GM12878 (cell line): ENCODE measurements at regions of chr19 and their contacts with region 1.

Region 1: GRCh38 chr19:51473009-51473707 is 5.2 kb upstream of the CEACAM18 start:
- DNase-seq: peak; percentile 15
- ATAC-seq: peak; percentile 91
- H3K4me3 ChIP-seq: no peak overlapping the region
- H3K27ac ChIP-seq: no peak overlapping the region
- H3K4me1 ChIP-seq: no peaks in the 10 kb centered on the region
- H3K27me3 ChIP-seq: no peaks in the 10 kb centered on the region; a peak in 1 of 4 replicates
- CTCF ChIP-seq: peak; percentile 65 to 93 (median 86)
- EP300 ChIP-seq: no peak
- POLR2A ChIP-seq: no peak
- RAD21 ChIP-seq: peak; percentile 92

Region 2: DNA sequence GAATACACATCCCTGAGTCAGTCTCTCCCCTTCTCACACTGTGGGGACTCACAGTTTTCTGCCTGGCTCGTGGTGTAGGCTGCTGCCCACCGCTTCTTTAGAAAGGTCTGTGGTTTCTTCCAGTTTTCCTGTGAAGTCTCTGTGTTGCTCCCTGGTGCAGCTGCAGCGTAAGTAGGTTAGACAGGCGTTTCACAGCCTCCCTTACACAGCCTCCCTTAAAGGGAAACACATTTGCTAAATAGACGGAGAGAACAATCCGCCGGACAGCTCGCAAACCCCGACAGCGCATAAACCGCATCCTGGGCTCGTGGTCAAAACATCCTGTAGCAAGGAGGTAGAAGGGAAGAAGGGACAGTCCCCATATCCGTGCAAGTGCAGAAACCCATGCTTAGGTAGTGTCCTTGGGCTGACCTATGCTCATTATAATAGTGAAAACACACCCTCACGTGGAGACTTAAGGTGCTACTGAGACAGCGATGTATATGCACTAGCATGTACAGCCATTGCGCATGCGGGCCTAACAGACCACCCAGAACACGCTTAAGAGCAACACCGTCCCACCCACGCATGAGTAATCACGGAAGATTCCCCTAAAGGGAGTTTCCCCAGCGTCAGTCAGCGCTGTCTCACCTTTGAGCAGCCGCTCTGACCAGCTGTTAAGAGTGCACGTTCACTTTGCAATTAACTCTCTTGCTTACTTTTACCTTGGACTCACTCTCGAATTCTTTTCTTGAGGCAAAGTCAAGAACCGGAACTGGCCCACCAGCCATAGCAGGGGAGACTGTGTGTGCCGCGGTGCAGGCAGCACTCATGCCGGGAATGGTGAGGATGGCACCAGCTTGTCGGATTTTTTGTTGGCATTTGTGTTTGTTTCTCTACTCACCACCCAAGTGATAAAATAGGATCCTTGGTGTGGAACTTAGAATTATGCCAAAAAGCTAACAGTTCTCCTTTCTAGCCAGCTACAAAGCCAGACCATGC is 31.5 kb before region 1 on chr19:
- CTCF ChIA-PET with region 1: interaction called, 10 read pairs
- POLR2A ChIA-PET with region 1: no interaction called
- RAD21 ChIA-PET with region 1: interaction called, 4 read pairs
- SMC1A ChIA-PET with region 1: interaction called, 5 read pairs
- in situ Hi-C with region 1: no loop called
- intact Hi-C with region 1: no loop called
- DNase-seq: peak; percentile 91
- ATAC-seq: peak; percentile 94
- H3K4me3 ChIP-seq: peak overlapping the region; percentile 49; the same call in 1 of the 2 replicates
- H3K27ac ChIP-seq: no peak overlapping the region
- H3K4me1 ChIP-seq: peaks cover 27% of the 10 kb centered on the region
- H3K27me3 ChIP-seq: peaks cover 0 to 4% of the 10 kb centered on the region in 2 experiments; a peak in 2 of 4 replicates
- CTCF ChIP-seq: peak in 2 of 3 experiments; percentile 4 to 16; a peak in 2 of 6 replicates
- EP300 ChIP-seq: peak; percentile 56 to 73
- POLR2A ChIP-seq: no peak
- RAD21 ChIP-seq: no peak

Region 3: DNA sequence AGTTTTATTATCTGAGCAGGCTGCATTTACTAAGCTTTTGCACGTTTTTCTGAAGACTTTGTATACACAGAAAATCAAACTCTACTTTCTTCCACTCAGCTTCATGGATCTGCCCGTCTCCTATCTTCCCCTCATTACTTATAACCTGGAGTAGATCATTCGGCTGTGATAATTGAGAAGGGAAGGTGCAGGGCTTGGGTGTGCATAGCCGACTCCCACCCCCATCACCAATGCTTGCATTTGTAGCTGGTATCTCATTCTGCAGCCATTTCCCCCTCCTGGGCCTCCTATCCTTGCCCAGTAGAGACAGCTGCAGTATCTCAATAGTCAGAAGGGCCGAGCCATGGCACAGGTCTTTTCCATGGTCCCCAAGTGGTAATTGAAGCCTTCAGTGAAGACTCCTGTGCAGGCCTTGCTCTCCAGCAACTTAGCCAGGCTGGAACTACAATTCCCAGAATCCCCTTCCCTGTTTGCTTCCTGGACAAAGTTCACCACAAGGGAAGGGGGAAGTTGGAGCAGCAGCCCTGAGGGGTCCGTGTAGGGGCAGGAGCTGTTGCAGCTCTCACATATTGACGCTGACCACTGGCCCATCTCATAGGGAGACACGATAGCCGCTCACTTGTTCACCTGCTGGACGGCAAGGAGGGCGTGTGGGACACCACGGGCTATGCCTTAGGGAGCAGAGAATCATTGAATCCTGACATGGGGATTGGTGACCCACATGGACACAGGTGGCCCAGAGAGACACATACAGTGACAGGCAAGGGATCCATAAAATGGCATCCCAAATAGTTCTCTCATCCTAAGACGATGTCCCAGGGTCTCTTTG is 12.8 kb before region 1 on chr19:
- CTCF ChIA-PET with region 1: interaction called, 13 read pairs
- POLR2A ChIA-PET with region 1: no interaction called
- RAD21 ChIA-PET with region 1: interaction called, 3 read pairs
- SMC1A ChIA-PET with region 1: interaction called, 3 read pairs
- in situ Hi-C with region 1: no loop called
- intact Hi-C with region 1: no loop called
- DNase-seq: no peak
- ATAC-seq: peak; percentile 20; the same call in 1 of the 3 replicates
- H3K4me3 ChIP-seq: no peak overlapping the region
- H3K27ac ChIP-seq: no peak overlapping the region
- H3K4me1 ChIP-seq: no peaks in the 10 kb centered on the region
- H3K27me3 ChIP-seq: no peaks in the 10 kb centered on the region
- CTCF ChIP-seq: no peak
- EP300 ChIP-seq: no peak
- POLR2A ChIP-seq: no peak
- RAD21 ChIP-seq: no peak

Region 4: DNA sequence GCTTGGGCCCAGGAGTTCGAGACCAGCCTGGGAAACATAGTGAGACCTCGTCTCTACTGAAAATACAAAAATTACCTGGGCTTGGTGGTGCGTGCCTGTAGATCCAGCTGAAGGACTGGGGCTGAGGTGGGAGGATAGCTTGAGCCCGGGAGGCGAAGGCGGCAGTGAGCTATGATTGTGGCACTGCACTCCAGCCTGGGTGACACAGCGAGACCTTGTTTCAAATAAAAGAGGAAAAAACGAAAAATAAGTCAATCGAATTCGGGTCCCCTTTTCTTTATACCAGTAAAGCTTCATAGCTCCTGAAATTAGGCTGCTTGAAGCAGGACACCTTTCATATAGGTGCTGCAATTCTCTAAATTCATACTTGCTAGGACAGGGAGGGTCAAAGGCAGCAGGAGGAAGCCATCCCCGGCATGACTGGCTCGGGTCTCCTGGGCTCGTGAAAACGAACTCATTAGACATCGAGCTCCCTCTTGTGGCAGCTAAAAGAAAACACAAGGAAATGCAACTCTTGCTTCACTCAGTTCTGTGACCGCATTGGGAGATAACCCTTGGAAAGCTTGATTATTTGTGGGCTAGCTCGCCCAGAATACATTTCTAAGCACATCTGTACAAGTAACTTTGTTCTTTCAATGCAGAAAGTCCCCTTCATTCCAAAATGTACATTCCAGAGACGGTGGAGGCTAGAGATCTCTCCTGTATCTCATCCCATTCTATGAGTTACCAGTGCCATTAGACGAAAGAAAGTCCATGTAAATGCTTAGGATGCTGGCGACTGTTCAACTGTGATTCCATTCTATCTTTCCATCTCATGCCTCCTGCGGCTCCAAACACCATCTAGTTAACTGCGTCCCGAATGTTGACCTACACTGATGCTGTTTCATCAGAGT is 304.7 kb after region 1 on chr19:
- CTCF ChIA-PET with region 1: interaction called, 11 read pairs
- POLR2A ChIA-PET with region 1: no interaction called
- RAD21 ChIA-PET with region 1: interaction called, 6 read pairs
- SMC1A ChIA-PET with region 1: interaction called, 6 read pairs
- in situ Hi-C with region 1: no loop called
- intact Hi-C with region 1: no loop called
- DNase-seq: no peak
- ATAC-seq: peak; percentile 63
- H3K4me3 ChIP-seq: no peak overlapping the region
- H3K27ac ChIP-seq: no peak overlapping the region
- H3K4me1 ChIP-seq: no peaks in the 10 kb centered on the region; the same call in 1 of the 2 replicates
- H3K27me3 ChIP-seq: no peaks in the 10 kb centered on the region
- CTCF ChIP-seq: peak; percentile 50 to 63 (median 55); a peak in 4 of 6 replicates
- EP300 ChIP-seq: no peak
- POLR2A ChIP-seq: no peak
- RAD21 ChIP-seq: peak; percentile 66